ENCODE measurements at regions of chr11 and their contacts with region 1.

Region 1: GRCh38 chr11:96168623-96169022 is 174.4 kb downstream of the MAML2 start:
- DNase-seq: peak in 1 of 2 donors; percentile 80
- H3K4me3 ChIP-seq: peak overlapping the region in 1 of 2 donors; percentile 3
- H3K27ac ChIP-seq: peak overlapping the region; percentile 47 to 67
- H3K4me1 ChIP-seq: peaks cover 10 to 39% of the 10 kb centered on the region in 2 donors
- H3K27me3 ChIP-seq: no peaks in the 10 kb centered on the region
- CTCF ChIP-seq: no peak

Region 2: DNA sequence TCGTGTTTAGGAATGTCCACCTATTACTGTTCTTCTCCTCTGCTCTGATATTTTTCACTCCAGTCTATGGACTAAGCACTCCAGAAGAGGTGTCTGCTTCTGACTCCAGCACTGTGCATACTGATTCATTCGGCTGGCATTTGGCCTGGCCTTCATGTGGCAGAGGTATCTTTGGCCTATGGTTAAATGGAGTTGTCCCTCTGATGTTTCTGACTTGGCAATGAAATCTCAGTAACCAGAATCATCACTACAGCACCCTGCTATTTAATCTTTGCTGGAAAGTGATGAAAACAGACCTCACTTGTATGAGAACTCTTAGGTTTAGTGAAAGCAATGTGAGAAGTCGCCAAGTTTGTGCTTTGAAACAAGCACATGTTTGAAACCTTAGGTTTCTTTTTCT is 19.2 kb after region 1 on chr11:
- intact Hi-C with region 1: loop called (anchors 2 kb)
- DNase-seq: peak in 1 of 2 donors; percentile 76
- H3K4me3 ChIP-seq: peak overlapping the region in 1 of 2 donors; percentile 6
- H3K27ac ChIP-seq: peak overlapping the region; percentile 71 to 83
- H3K4me1 ChIP-seq: peaks cover 9 to 25% of the 10 kb centered on the region in 2 donors
- H3K27me3 ChIP-seq: no peaks in the 10 kb centered on the region
- CTCF ChIP-seq: no peak

Region 3: GRCh38 chr11:96324960-96325359 is 156.3 kb after region 1 on chr11:
- intact Hi-C with region 1: loop called (anchors 5 kb)
- DNase-seq: no peak
- H3K4me3 ChIP-seq: peak overlapping the region in 1 of 2 donors; percentile 12
- H3K27ac ChIP-seq: peak overlapping the region; percentile 75 to 81
- H3K4me1 ChIP-seq: peaks cover 0 to 32% of the 10 kb centered on the region in 2 donors
- H3K27me3 ChIP-seq: no peaks in the 10 kb centered on the region
- CTCF ChIP-seq: no peak